Activated T-helper 2 cell treated with anti-CD3 and anti-CD28 coated beads, Interferon-gamma antibody, Interleukin-2, Interleukin-4, amounts not matched to agents 10 μg/mL and 5 μg/mL and 100 μg/mL, durations not matched to agents 14 hours and 24 hours and 36 hours (primary cell): ENCODE measurements at regions of chr9 and their contacts with region 1.

Region 1: GRCh38 chr9:6973762-6974161 is 216.0 kb downstream of the KDM4C start:
- DNase-seq: no peak
- H3K4me3 Mint-ChIP-seq: no peak overlapping the region
- H3K27ac Mint-ChIP-seq: no peak overlapping the region
- H3K4me1 Mint-ChIP-seq: peaks cover 21% of the 10 kb centered on the region
- H3K27me3 Mint-ChIP-seq: no peaks in the 10 kb centered on the region

Region 2: DNA sequence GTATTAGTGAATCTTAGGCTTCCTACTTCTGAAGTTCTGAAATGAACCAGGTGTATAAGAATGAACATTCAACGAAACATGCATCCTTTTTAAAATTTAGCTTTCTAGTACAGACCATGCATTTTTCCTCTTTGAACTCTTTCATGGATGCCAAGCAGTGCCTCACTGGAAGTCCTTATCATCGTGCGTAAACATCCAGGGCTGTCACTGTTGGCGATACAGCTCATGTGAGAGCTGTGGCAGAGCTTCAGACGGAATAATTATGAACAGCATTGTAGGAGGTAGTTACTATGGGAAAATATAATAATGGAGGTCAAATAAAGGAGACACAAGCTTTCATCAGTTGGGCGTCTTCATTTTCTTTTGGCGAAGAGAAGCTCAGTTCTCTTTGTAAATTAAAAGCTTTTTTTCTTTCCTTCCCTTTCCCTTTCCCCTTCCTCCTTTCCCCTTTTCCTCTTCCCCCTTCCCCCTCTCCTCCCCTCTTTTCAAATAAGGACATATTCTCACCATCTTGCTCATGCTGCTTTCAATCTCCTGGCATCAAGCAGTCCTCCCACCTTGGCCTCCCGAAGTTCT is 48.7 kb before region 1 on chr9:
- intact Hi-C with region 1: loop called (anchors 10 kb)
- DNase-seq: no peak
- H3K4me3 Mint-ChIP-seq: no peak overlapping the region
- H3K27ac Mint-ChIP-seq: no peak overlapping the region
- H3K4me1 Mint-ChIP-seq: peaks cover 46% of the 10 kb centered on the region
- H3K27me3 Mint-ChIP-seq: no peaks in the 10 kb centered on the region

Region 3: GRCh38 chr9:7011395-7012067 is 37.8 kb after region 1 on chr9:
- intact Hi-C with region 1: loop called (anchors 5 kb)
- DNase-seq: peak; percentile 32
- H3K4me3 Mint-ChIP-seq: no peak overlapping the region
- H3K27ac Mint-ChIP-seq: no peak overlapping the region
- H3K4me1 Mint-ChIP-seq: peaks cover 18% of the 10 kb centered on the region
- H3K27me3 Mint-ChIP-seq: no peaks in the 10 kb centered on the region

Region 4: GRCh38 chr9:7067169-7067568 is 93.4 kb after region 1 on chr9:
- intact Hi-C with region 1: no loop called
- DNase-seq: no peak
- H3K4me3 Mint-ChIP-seq: no peak overlapping the region
- H3K27ac Mint-ChIP-seq: no peak overlapping the region
- H3K4me1 Mint-ChIP-seq: no peaks in the 10 kb centered on the region
- H3K27me3 Mint-ChIP-seq: no peaks in the 10 kb centered on the region